Activated B cell treated with CpG ODN at 0.5 μM for 24 hours (primary cell): ENCODE measurements at regions of chr4 and their contacts with region 1.

Region 1: GRCh38 chr4:142840516-142841123 is 5.5 kb downstream of the INPP4B start:
- DNase-seq: no peak
- ATAC-seq: no peak
- H3K4me3 Mint-ChIP-seq: no peak overlapping the region
- H3K27ac Mint-ChIP-seq: no peak overlapping the region
- H3K4me1 Mint-ChIP-seq: peaks cover 4% of the 10 kb centered on the region
- H3K27me3 Mint-ChIP-seq: peaks cover 14% of the 10 kb centered on the region
- CTCF ChIP-seq: no peak

Region 2: GRCh38 chr4:141346144-141346543 is 1494.5 kb before region 1 on chr4:
- CTCF ChIA-PET with region 1: no interaction called
- POLR2A ChIA-PET with region 1: no interaction called
- intact Hi-C with region 1: loop called (anchors 5 kb)
- DNase-seq: no peak
- ATAC-seq: no peak
- H3K4me3 Mint-ChIP-seq: no peak overlapping the region
- H3K27ac Mint-ChIP-seq: no peak overlapping the region
- H3K4me1 Mint-ChIP-seq: peaks cover 5% of the 10 kb centered on the region
- H3K27me3 Mint-ChIP-seq: no peaks in the 10 kb centered on the region
- CTCF ChIP-seq: no peak

Region 3: DNA sequence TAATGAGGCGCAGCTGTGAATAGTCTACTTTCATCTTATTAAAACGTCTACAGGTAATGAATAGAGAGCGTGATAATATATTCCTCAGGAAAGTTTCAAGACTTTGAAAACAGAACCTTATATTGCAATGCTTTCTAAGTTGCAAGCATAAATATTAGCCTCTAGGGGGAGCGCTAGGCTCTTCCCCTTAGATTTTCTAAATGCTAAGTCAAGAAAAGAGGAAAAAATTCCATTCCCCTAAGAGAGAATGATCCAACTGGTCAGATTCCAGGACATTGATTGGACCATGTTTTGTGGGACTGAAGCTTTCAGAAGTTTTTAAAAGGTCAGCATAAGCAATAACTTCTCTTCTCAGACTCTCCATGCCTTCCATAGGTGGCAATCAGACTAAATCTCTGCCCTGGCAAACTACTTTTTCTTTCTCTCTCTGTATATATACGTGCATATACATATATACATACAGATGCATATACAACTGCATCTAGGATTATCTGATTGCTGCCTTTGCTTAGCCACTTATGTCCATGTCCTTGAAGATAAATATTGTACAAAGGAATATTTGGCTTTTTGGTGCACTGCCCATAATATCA is 487.4 kb before region 1 on chr4:
- CTCF ChIA-PET with region 1: no interaction called
- POLR2A ChIA-PET with region 1: no interaction called
- intact Hi-C with region 1: loop called (anchors 1 kb)
- DNase-seq: no peak
- ATAC-seq: no peak
- H3K4me3 Mint-ChIP-seq: no peak overlapping the region
- H3K27ac Mint-ChIP-seq: no peak overlapping the region
- H3K4me1 Mint-ChIP-seq: peaks cover 5% of the 10 kb centered on the region
- H3K27me3 Mint-ChIP-seq: no peaks in the 10 kb centered on the region
- CTCF ChIP-seq: no peak